Activated CD8-positive, alpha-beta T cell treated with anti-CD3 and anti-CD28 coated beads for 36 hours (primary cell): ENCODE measurements at regions of chr17 and their contacts with region 1.

Region 1: GRCh38 chr17:49715717-49716279 is 8.0 kb upstream of the SLC35B1 start:
- DNase-seq: peak; percentile 81
- ATAC-seq: peak; percentile 56
- H3K4me3 Mint-ChIP-seq: peak overlapping the region; percentile 52
- H3K27ac Mint-ChIP-seq: peak overlapping the region; percentile 94
- H3K4me1 Mint-ChIP-seq: peaks cover 42% of the 10 kb centered on the region
- H3K27me3 Mint-ChIP-seq: no peaks in the 10 kb centered on the region
- CTCF ChIP-seq: no peak

Region 2: GRCh38 chr17:49748791-49749190 is 33.0 kb after region 1 on chr17:
- CTCF ChIA-PET with region 1: interaction called, 6 read pairs
- POLR2A ChIA-PET with region 1: interaction called, 23 read pairs
- intact Hi-C with region 1: loop called (anchors 5 kb)
- DNase-seq: peak; percentile 89
- ATAC-seq: peak; percentile 88
- H3K4me3 Mint-ChIP-seq: peak overlapping the region; percentile 38
- H3K27ac Mint-ChIP-seq: peak overlapping the region; percentile 94
- H3K4me1 Mint-ChIP-seq: peaks cover 82% of the 10 kb centered on the region
- H3K27me3 Mint-ChIP-seq: no peaks in the 10 kb centered on the region
- CTCF ChIP-seq: no peak

Region 3: GRCh38 chr17:49788478-49789242 is 72.9 kb after region 1 on chr17 and contains the start of gene KAT7:
- CTCF ChIA-PET with region 1: interaction called, 4 read pairs
- POLR2A ChIA-PET with region 1: interaction called, 14 read pairs
- intact Hi-C with region 1: no loop called
- DNase-seq: peak; percentile 99
- ATAC-seq: peak; percentile 90
- H3K4me3 Mint-ChIP-seq: peak within 1 kb of the TSS; percentile 94
- H3K27ac Mint-ChIP-seq: peak within 1 kb of the TSS; percentile 99
- H3K4me1 Mint-ChIP-seq: peaks cover 50% of the 10 kb centered on the region
- H3K27me3 Mint-ChIP-seq: no peaks in the 10 kb centered on the region
- CTCF ChIP-seq: no peak
- total RNA-seq, gene KAT7: 61.2 to 66.6 TPM